CD4-positive, alpha-beta T cell (primary cell): ENCODE measurements at regions of chr14 and their contacts with region 1.

Region 1: GRCh38 chr14:103920981-103921854 is 7.0 kb upstream of the TDRD9 start:
- DNase-seq: peak; percentile 88 to 97 (median 95)
- ATAC-seq: peak; percentile 98
- H3K4me3 ChIP-seq: peak overlapping the region; percentile 100
- H3K4me3 Mint-ChIP-seq: peak overlapping the region; percentile 86
- H3K27ac ChIP-seq: peak overlapping the region; percentile 65 to 68
- H3K27ac Mint-ChIP-seq: peak overlapping the region; percentile 51
- H3K4me1 ChIP-seq: peaks cover 39% of the 10 kb centered on the region
- H3K4me1 Mint-ChIP-seq: peaks cover 18% of the 10 kb centered on the region
- H3K27me3 ChIP-seq: peaks cover 0 to 2% of the 10 kb centered on the region in 2 experiments
- H3K27me3 Mint-ChIP-seq: peaks cover 5% of the 10 kb centered on the region
- CTCF ChIP-seq: peak; percentile 98

Region 2: GRCh38 chr14:103562429-103563225 is 358.6 kb before region 1 on chr14 and contains the starts of genes BAG5 and COA8:
- CTCF ChIA-PET with region 1: no interaction called
- POLR2A ChIA-PET with region 1: no interaction called
- intact Hi-C with region 1: loop called in 1 of 2 experiments (anchors 5 kb)
- DNase-seq: peak; percentile 68 to 93 (median 82)
- ATAC-seq: peak; percentile 79
- H3K4me3 ChIP-seq: peak within 1 kb of the TSS; percentile 99
- H3K4me3 Mint-ChIP-seq: peak within 1 kb of the TSS; percentile 96
- H3K27ac ChIP-seq: peak within 1 kb of the TSS; percentile 72 to 85
- H3K27ac Mint-ChIP-seq: peak within 1 kb of the TSS; percentile 94
- H3K4me1 ChIP-seq: peaks cover 56% of the 10 kb centered on the region
- H3K4me1 Mint-ChIP-seq: peaks cover 62% of the 10 kb centered on the region
- H3K27me3 ChIP-seq: no peaks in the 10 kb centered on the region
- H3K27me3 Mint-ChIP-seq: no peaks in the 10 kb centered on the region
- CTCF ChIP-seq: no peak
- total RNA-seq, gene BAG5: 39.4 to 40.3 TPM
- total RNA-seq, gene COA8: 9.1 to 10.7 TPM

Region 3: DNA sequence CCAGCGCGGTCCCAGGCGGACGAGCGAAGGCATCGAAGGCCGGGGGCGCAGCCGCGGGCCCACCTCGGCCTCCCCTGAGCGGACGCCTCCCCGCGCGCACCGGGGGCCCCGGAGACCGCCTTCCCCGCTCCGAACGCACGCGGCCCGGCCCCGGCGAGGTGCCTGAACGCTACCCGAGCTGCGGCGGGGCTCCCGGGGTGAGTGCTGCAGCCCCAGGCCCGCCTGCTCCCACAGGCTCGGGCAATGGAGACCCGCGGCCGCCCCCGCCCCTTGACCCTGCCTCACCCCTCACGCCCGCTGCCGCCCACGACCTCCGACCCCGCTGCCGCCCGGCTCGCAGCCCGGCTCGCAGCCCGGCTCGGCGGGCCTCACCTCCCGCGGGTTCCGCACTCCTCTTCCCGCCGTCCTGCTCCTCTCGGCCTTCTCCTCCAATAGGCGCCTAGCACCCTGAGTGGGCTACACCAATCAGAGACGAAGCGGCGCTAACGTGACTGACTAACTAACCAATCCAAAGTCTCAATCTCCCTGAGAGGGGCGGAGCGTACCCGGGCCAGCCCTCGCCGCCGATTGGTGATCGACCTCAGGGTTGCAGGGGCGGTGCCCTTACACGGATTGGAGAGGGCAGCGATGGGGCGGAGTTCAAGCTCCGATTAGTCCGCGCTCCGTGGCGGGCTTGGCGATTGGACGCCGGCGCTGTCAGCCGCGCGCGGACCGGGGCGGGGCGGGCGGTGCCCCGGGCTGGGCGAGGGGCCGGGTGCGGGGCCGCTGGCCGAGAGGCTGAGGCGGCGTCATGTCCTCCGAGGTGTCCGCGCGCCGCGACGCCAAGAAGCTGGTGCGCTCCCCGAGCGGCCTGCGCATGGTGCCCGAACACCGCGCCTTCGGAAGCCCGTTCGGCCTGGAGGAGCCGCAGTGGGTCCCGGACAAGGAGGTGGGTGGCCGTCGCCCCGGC is 205.9 kb before region 1 on chr14 and contains the starts of genes XRCC3 and ZFYVE21:
- CTCF ChIA-PET with region 1: no interaction called
- POLR2A ChIA-PET with region 1: no interaction called
- intact Hi-C with region 1: loop called in 1 of 2 experiments (anchors 2 kb)
- DNase-seq: peak; percentile 99 to 100 (median 99)
- ATAC-seq: peak; percentile 93
- H3K4me3 ChIP-seq: peak within 1 kb of the TSS; percentile 51
- H3K4me3 Mint-ChIP-seq: peak within 1 kb of the TSS; percentile 94
- H3K27ac ChIP-seq: no peak within 1 kb of the TSS
- H3K27ac Mint-ChIP-seq: peak within 1 kb of the TSS; percentile 84
- H3K4me1 ChIP-seq: peaks cover 39% of the 10 kb centered on the region
- H3K4me1 Mint-ChIP-seq: peaks cover 43% of the 10 kb centered on the region
- H3K27me3 ChIP-seq: no peaks in the 10 kb centered on the region
- H3K27me3 Mint-ChIP-seq: no peaks in the 10 kb centered on the region
- CTCF ChIP-seq: no peak
- total RNA-seq, gene XRCC3: 4.6 to 4.8 TPM
- total RNA-seq, gene ZFYVE21: 2.6 to 3.0 TPM

Region 4: GRCh38 chr14:103847451-103848188 is 73.6 kb before region 1 on chr14 and contains the start of gene PPP1R13B:
- CTCF ChIA-PET with region 1: no interaction called
- POLR2A ChIA-PET with region 1: no interaction called
- intact Hi-C with region 1: loop called in 1 of 2 experiments (anchors 2 kb)
- DNase-seq: peak; percentile 86 to 97 (median 94)
- ATAC-seq: peak; percentile 97
- H3K4me3 ChIP-seq: peak within 1 kb of the TSS; percentile 74
- H3K4me3 Mint-ChIP-seq: peak within 1 kb of the TSS; percentile 95
- H3K27ac ChIP-seq: no peak within 1 kb of the TSS
- H3K27ac Mint-ChIP-seq: peak within 1 kb of the TSS; percentile 78
- H3K4me1 ChIP-seq: peaks cover 14% of the 10 kb centered on the region
- H3K4me1 Mint-ChIP-seq: peaks cover 23% of the 10 kb centered on the region
- H3K27me3 ChIP-seq: no peaks in the 10 kb centered on the region
- H3K27me3 Mint-ChIP-seq: no peaks in the 10 kb centered on the region
- CTCF ChIP-seq: no peak
- total RNA-seq, gene PPP1R13B: 14.3 to 14.4 TPM

Region 5: GRCh38 chr14:103871596-103872480 is 49.4 kb before region 1 on chr14:
- CTCF ChIA-PET with region 1: no interaction called
- POLR2A ChIA-PET with region 1: no interaction called
- intact Hi-C with region 1: loop called in 1 of 2 experiments (anchors 2 kb)
- DNase-seq: peak; percentile 50 to 86 (median 72)
- ATAC-seq: peak; percentile 82
- H3K4me3 ChIP-seq: peak overlapping the region; percentile 70
- H3K4me3 Mint-ChIP-seq: peak overlapping the region; percentile 90
- H3K27ac ChIP-seq: peak overlapping the region in 1 of 2 donors; percentile 52
- H3K27ac Mint-ChIP-seq: peak overlapping the region; percentile 84
- H3K4me1 ChIP-seq: peaks cover 20% of the 10 kb centered on the region
- H3K4me1 Mint-ChIP-seq: peaks cover 16% of the 10 kb centered on the region
- H3K27me3 ChIP-seq: no peaks in the 10 kb centered on the region
- H3K27me3 Mint-ChIP-seq: no peaks in the 10 kb centered on the region
- CTCF ChIP-seq: no peak

Region 6: GRCh38 chr14:103899833-103900232 is 21.4 kb before region 1 on chr14:
- CTCF ChIA-PET with region 1: interaction called, 15 read pairs
- POLR2A ChIA-PET with region 1: no interaction called
- intact Hi-C with region 1: loop called in 1 of 2 experiments (anchors 2 kb)
- DNase-seq: no peak
- ATAC-seq: no peak
- H3K4me3 ChIP-seq: no peak overlapping the region
- H3K4me3 Mint-ChIP-seq: no peak overlapping the region
- H3K27ac ChIP-seq: no peak overlapping the region
- H3K27ac Mint-ChIP-seq: no peak overlapping the region
- H3K4me1 ChIP-seq: peaks cover 5% of the 10 kb centered on the region
- H3K4me1 Mint-ChIP-seq: no peaks in the 10 kb centered on the region
- H3K27me3 ChIP-seq: no peaks in the 10 kb centered on the region
- H3K27me3 Mint-ChIP-seq: no peaks in the 10 kb centered on the region
- CTCF ChIP-seq: no peak

Region 7: GRCh38 chr14:103910262-103910935 is 10.8 kb before region 1 on chr14:
- CTCF ChIA-PET with region 1: interaction called, 13 read pairs
- POLR2A ChIA-PET with region 1: interaction called, 3 read pairs
- intact Hi-C with region 1: loop called in 1 of 2 experiments (anchors 1 kb)
- DNase-seq: peak; percentile 57 to 86 (median 68)
- ATAC-seq: peak; percentile 72
- H3K4me3 ChIP-seq: peak overlapping the region; percentile 33
- H3K4me3 Mint-ChIP-seq: peak overlapping the region; percentile 78
- H3K27ac ChIP-seq: peak overlapping the region in 1 of 2 donors; percentile 62
- H3K27ac Mint-ChIP-seq: peak overlapping the region; percentile 86
- H3K4me1 ChIP-seq: peaks cover 24% of the 10 kb centered on the region
- H3K4me1 Mint-ChIP-seq: peaks cover 27% of the 10 kb centered on the region
- H3K27me3 ChIP-seq: no peaks in the 10 kb centered on the region
- H3K27me3 Mint-ChIP-seq: no peaks in the 10 kb centered on the region
- CTCF ChIP-seq: peak; percentile 94